ENCODE measurements at regions of chr11 and their contacts with region 1.

Region 1: GRCh38 chr11:96481771-96482170 is 92.0 kb downstream of the JRKL start:
- DNase-seq: no peak
- H3K27ac ChIP-seq: no peak overlapping the region
- CTCF ChIP-seq: no peak

Region 2: GRCh38 chr11:96357794-96358193 is 124.0 kb before region 1 on chr11:
- CTCF ChIA-PET with region 1: no interaction called
- POLR2A ChIA-PET with region 1: no interaction called
- DNase-seq: no peak
- H3K27ac ChIP-seq: no peak overlapping the region
- CTCF ChIP-seq: no peak

Region 3: DNA sequence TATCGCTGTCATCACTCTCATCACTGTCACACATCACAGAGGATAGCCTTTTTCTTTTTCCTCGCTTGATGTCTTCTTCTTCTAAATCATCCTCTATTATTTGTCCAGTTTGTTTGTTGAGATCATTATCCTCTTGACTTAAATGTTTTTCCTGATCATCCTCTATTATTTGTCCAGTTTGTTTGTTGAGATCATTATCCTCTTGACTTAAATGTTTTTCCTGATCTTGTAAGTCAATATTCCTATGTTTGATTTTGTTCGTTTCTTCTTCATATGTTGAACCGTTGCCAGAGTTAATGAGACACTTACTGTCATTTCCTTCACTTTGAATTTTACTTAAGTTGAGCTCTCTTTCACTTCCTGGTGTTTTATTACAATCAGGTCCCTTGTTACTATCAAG is 97.6 kb before region 1 on chr11:
- CTCF ChIA-PET with region 1: no interaction called
- POLR2A ChIA-PET with region 1: no interaction called
- DNase-seq: no peak
- H3K27ac ChIP-seq: no peak overlapping the region
- CTCF ChIP-seq: no peak

Region 4: GRCh38 chr11:96464700-96465307 is 17.0 kb before region 1 on chr11:
- CTCF ChIA-PET with region 1: interaction called, 17 read pairs
- POLR2A ChIA-PET with region 1: no interaction called
- DNase-seq: peak; percentile 78
- H3K27ac ChIP-seq: no peak overlapping the region
- CTCF ChIP-seq: peak; percentile 66

Region 5: DNA sequence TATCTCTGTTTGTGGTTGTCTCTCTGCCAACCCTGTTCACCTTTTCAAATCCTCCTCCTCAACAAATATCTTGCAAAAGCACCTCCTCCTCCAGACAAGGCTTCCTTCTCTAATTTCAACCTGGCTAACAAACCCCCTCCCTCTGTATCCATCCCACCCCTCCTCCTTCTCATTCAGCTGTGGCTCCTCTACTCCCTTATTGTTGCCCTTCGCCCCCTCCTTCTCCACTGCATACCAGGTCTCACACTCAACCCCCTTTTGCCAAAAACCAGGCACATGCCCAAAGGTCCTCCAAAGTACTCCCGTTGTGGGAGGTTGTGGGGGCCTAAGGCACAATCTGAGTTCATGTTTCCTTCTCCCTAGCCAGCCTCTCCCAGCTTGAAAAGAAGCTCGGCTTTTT is 18.7 kb after region 1 on chr11:
- CTCF ChIA-PET with region 1: no interaction called
- POLR2A ChIA-PET with region 1: no interaction called
- DNase-seq: no peak
- H3K27ac ChIP-seq: no peak overlapping the region
- CTCF ChIP-seq: no peak

Measured in RWPE1 (cell line).